ENCODE measurements at regions of chr12 and their contacts with region 1.

Region 1: DNA sequence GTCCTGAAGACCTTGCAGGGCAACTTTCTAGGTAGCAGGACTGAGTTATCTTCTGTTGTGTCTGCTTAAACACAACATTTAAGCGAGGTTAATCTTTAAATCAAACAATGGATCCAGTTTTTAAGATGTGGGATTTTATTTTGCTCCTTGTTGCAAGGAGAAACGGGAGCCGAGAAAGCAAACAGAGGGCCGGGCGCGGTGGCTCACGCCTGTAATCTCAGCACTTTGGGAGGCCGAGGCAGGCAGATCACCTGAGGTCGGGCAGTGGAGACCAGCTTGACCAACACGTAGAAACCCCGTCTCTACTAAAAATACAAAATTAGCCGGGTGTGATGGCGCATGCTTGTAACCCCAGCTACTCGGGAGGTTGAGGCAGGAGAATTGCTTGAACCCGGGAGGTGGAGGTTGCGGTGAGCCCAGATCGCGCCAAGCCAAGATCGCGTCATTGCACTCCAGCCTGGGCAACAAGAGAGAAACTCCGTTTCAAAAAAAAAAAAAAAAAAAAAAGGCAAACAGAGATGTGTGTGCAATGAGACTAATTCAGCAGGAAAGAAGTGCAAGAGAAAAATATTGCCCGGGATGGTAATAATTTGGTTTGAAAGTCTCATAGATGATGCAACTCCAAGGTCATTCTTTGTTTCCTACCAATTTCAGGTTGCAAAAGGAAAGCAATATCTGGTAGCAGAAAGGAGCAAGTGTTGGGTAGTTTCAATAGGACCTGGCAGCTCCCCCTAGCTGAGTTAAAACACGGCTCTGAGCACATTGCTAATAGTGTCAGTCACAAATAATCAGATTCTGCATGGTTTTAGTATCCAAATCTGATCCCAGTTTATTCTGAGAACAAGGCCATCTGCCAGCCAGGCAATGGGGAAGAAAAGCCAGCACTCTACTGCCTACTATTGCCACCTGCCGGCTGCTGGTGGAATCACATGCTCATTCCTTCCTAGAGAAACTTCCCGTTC is 141.4 kb downstream of the PPM1H start:
- DNase-seq: peak; percentile 92

Region 2: DNA sequence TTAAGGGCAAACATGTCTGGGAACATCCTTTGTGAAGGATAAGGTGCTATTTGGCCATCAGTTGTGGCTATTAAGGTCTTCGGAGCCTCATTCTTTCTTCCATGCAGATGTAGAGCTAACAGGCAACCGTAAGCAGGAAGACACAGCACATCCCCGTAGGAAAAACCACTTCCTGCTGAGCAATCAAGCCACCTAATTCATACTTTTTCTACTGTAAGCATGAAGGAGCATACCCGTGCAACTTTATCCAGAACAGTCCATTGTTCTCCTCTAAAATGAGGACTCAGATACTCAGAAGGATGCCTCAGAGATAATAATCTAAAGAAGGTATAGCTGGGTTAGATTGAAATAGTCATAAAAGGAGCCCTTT is 90.5 kb before region 1 on chr12:
- intact Hi-C with region 1: loop called (anchors 5 kb)
- DNase-seq: no peak

Region 3: DNA sequence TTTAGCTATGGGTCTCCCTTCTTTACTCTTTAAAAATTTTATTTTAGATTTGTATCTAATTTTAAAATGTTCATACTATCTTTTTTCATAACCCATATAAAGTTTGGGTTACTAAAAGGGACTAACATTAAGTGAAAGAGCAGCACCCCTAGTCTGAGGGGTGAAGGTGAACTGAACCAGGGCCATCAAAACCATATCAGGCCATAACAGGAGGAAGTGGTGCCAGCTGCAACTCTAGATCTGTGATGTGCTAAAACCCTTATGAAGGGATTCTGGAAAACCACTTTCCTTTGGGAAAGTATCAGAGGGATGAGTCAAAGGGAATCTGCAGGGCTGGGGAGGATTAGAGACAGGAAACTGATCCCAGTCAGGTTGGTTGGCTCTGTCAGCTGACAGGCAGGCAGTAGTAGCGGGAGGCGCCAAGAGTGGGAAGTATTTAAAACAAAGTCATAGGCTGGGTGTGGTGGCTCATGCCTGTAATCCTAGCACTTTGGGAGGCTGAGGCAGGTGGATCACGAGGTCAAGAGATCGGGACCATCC is 21.1 kb before region 1 on chr12:
- intact Hi-C with region 1: no loop called
- DNase-seq: no peak

Region 4: DNA sequence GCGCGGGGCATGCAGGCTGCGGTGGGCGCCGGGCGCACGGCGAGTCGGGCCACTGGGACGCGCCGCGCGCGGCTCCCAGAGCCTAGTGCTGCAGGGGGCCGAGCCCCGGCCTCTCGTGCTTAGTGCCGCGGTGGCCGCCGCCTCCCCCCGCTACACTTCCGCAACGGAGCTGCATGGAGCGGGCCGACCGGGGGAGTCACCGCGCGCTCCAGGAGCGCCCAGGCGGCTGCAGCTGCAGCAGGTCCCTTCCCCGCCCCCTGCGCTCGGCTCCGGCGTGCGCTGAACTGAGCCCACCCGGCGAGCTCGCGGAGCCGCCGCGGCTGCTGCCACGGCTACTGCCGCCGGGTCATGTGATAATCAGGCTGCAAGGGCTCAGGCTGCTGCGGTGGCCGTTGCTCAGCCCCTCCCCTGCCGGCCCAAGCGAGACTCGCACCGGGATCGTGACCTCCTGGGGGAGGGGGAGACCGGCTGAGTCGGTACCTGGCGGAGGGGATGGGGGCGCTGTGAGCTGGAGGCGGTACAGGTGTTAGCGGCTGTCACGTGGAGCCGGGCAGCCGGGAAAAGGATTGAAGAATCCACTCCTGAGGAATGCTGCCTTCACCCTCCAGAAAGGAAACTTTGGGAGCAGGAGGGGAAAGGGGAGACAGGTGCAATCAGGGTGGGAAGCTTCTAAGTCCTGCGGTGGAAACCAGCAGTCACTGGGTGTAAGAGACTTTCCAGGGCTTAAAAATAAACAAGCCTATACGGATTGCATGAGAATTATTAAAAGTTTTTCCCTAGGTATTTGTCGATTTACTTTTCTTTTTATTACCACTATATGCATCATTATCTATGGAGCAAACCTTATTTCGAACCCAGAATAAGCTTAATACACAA is 141.5 kb after region 1 on chr12 and contains the start of gene PPM1H:
- intact Hi-C with region 1: no loop called
- DNase-seq: peak; percentile 85
- total RNA-seq, gene PPM1H: 4.0 TPM

Measured in cardiac septum (tissue), 1 donor.